Endothelial cell of umbilical vein (primary cell): ENCODE measurements at regions of chr12 and their contacts with region 1.

Region 1: GRCh38 chr12:77777274-77777673 is 53.4 kb upstream of the NAV3 start:
- DNase-seq: peak; percentile 16
- H3K4me3 ChIP-seq: no peak overlapping the region
- H3K27ac ChIP-seq: no peak overlapping the region
- H3K4me1 ChIP-seq: peaks cover 4% of the 10 kb centered on the region
- H3K27me3 ChIP-seq: no peaks in the 10 kb centered on the region
- CTCF ChIP-seq: no peak
- POLR2A ChIP-seq: no peak

Region 2: GRCh38 chr12:78009031-78009430 is 231.8 kb after region 1 on chr12:
- CTCF ChIA-PET with region 1: no interaction called
- POLR2A ChIA-PET with region 1: interaction called, 15 read pairs
- dilution Hi-C with region 1: no loop called
- intact Hi-C with region 1: no loop called
- DNase-seq: no peak
- H3K4me3 ChIP-seq: no peak overlapping the region
- H3K27ac ChIP-seq: no peak overlapping the region
- H3K4me1 ChIP-seq: no peaks in the 10 kb centered on the region
- H3K27me3 ChIP-seq: no peaks in the 10 kb centered on the region
- CTCF ChIP-seq: no peak
- POLR2A ChIP-seq: no peak